MCF 10A (cell line): ENCODE measurements at regions of chr5 and their contacts with region 1.

Region 1: DNA sequence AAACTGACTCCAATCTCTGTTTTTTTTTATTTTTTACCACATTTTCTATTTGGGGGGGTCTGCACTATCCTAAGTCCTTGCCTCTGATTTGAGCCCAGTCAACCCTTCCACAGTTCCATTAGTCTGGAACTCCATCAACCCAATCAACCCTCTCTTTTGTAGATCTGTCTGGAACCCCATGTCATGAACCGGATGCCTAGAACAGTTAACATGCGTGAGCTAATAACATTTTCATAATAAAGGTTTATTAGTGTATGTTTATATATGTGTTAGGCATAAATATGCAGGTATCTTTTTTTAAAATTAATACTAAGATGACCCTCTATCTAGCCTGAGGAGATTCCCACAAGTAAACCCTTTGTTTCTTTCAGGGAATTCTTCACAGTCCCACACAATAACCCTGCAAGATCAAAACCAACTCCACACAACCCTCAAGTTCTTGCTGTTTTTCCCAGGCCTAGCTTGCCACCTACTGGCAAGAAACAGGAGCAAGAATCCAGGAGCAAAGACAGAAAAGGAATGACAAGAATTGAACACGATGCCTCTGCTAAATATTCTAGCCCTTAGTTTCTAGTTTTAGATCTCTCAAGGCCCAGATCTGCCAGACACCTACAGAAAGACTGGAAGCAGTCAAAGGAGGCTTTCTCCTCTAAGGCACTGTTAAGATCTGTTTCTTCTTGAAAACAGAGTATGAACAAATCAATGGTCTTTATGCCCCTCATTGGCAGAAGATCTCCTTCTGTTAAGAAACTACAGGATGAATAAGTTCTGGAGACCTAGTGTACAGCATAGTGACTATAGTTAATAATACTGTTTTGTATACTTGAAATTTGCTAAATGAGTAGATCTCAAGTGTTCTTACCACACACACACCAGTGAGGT is 100.4 kb downstream of the TRIM36 start:
- DNase-seq: peak; percentile 70
- H3K4me3 Mint-ChIP-seq: no peak overlapping the region
- H3K27ac Mint-ChIP-seq: no peak overlapping the region
- H3K4me1 Mint-ChIP-seq: no peaks in the 10 kb centered on the region
- H3K27me3 Mint-ChIP-seq: peaks cover 36% of the 10 kb centered on the region
- CTCF ChIP-seq: peak; percentile 68

Region 2: DNA sequence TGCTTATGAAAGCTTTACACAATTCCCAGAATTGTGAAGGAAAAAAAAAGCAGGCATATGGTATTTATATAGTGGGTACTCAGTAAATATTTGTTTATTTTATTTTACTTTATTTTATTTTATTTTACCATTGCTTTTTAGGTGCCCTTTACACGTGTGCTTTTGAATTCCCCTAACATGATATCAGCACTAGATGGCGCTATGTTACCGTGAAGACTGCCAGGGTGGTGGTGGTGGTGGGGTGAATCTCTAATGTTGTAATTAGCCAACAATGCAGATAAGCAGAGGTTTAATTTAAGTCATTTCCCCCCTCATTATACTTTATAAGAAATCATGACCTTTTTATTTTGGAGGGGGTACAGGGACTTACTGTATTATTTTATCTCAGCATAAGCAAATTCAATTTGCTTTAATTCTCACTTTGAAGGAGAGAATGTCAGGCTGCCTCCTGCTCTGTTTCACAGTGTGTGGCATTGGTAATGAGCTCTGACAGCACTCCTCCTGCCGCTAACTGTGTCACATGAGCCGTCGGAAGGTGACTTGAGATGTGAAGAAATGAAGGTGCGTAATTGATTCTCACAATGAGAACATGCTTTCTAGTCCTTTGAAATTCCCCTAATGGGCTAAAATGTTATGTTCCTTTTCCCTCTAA is 1390.3 kb before region 1 on chr5:
- CTCF ChIA-PET with region 1: interaction called, 4 read pairs
- POLR2A ChIA-PET with region 1: no interaction called
- intact Hi-C with region 1: loop called (anchors 5 kb)
- DNase-seq: peak; percentile 70
- H3K4me3 Mint-ChIP-seq: no peak overlapping the region
- H3K27ac Mint-ChIP-seq: no peak overlapping the region
- H3K4me1 Mint-ChIP-seq: no peaks in the 10 kb centered on the region
- H3K27me3 Mint-ChIP-seq: no peaks in the 10 kb centered on the region
- CTCF ChIP-seq: peak; percentile 71

Region 3: GRCh38 chr5:114803353-114803752 is 266.0 kb before region 1 on chr5:
- CTCF ChIA-PET with region 1: interaction called, 15 read pairs
- POLR2A ChIA-PET with region 1: no interaction called
- intact Hi-C with region 1: loop called (anchors 1 kb)
- DNase-seq: peak; percentile 13
- H3K4me3 Mint-ChIP-seq: no peak overlapping the region
- H3K27ac Mint-ChIP-seq: no peak overlapping the region
- H3K4me1 Mint-ChIP-seq: no peaks in the 10 kb centered on the region
- H3K27me3 Mint-ChIP-seq: peaks cover 11% of the 10 kb centered on the region
- CTCF ChIP-seq: peak; percentile 10

Region 4: GRCh38 chr5:115050866-115051265 is 18.5 kb before region 1 on chr5:
- CTCF ChIA-PET with region 1: interaction called, 17 read pairs
- POLR2A ChIA-PET with region 1: no interaction called
- intact Hi-C with region 1: no loop called
- DNase-seq: peak; percentile 59
- H3K4me3 Mint-ChIP-seq: no peak overlapping the region
- H3K27ac Mint-ChIP-seq: no peak overlapping the region
- H3K4me1 Mint-ChIP-seq: no peaks in the 10 kb centered on the region
- H3K27me3 Mint-ChIP-seq: peaks cover 39% of the 10 kb centered on the region
- CTCF ChIP-seq: no peak

Region 5: DNA sequence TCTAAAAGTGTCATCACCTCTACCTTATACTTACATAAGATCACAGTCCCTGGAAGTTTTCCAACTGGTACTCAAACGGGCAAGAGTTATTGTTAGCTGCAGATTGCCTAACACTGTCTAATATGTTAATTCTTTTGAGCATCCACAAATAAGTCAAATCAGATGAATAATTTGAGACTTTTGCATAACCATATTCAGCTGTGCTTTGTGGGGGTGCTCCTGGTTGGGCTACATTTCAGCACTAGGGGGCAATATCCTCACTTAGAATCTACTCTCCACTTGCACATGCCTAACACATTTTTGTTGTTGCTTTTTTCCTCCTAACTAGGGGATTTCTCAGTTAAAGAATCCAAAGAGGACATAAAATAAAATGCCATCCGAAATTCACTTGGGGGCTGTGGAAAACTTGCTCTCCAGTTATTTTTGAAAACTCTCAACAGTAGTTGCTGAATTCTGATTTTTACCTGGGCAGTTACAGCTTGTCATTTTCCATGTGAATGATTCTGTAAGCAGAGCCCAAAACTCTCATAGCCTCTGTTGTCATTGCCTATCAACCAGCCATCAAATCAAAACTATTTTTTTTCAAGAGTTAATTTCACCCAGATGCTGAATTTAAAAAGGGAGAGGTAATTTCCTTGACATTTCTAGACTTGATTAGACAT is 28.8 kb after region 1 on chr5:
- CTCF ChIA-PET with region 1: interaction called, 11 read pairs
- POLR2A ChIA-PET with region 1: interaction called, 4 read pairs
- intact Hi-C with region 1: no loop called
- DNase-seq: peak; percentile 62
- H3K4me3 Mint-ChIP-seq: no peak overlapping the region
- H3K27ac Mint-ChIP-seq: no peak overlapping the region
- H3K4me1 Mint-ChIP-seq: no peaks in the 10 kb centered on the region
- H3K27me3 Mint-ChIP-seq: no peaks in the 10 kb centered on the region
- CTCF ChIP-seq: peak; percentile 66

Region 6: DNA sequence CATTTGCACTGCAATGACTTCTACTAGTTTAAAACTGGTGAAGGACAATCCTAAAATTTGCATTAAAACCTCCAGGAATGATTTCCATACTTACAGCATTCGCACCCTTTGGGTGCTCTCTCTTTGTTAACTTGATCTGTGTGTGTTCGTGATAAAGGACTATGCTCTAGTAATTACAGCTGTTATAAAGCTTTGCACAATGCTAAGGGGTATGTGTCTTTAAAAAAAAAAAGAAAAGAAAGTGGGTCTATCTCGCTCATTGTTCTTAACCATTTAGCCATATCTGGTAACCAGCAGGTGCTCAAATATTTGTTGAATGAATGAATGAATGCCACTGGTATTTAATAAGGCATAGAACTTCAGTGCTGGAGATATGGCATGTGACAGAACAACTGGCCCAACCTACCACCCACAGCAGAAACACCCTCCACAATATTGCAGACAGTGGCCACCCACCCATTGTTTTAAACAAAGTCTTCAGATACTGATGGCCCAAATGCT is 91.7 kb after region 1 on chr5:
- CTCF ChIA-PET with region 1: no interaction called
- POLR2A ChIA-PET with region 1: no interaction called
- intact Hi-C with region 1: no loop called
- DNase-seq: no peak
- H3K4me3 Mint-ChIP-seq: no peak overlapping the region
- H3K27ac Mint-ChIP-seq: no peak overlapping the region
- H3K4me1 Mint-ChIP-seq: no peaks in the 10 kb centered on the region
- H3K27me3 Mint-ChIP-seq: no peaks in the 10 kb centered on the region
- CTCF ChIP-seq: no peak